ENCODE measurements at regions of chr9 and their contacts with region 1.

Region 1: DNA sequence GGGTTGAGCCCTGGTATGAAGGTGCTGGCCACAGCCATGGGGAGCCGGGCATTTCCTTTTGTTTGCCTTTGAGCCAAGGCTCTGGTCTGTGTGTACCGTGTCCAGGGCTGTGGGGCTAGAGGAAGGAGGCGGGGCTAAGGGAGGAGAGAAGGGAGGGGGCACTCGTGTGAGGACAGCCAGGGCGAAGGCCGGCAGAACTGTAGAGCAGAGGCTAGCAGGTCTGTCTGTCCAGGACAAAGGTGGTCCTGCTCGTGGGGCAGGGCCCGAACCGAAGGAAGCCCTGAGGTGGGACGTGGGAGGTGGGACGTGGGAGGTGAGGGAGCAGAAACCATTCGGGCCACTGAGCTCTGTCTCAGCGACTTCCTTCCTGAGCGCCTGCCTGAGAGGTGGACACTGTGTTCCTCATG is 41.3 kb upstream of the TESK1 start:
- DNase-seq: peak; percentile 83
- H3K4me3 ChIP-seq: peak overlapping the region in 3 of 4 donors; percentile 9 to 24 (median 14)
- H3K27ac ChIP-seq: peak overlapping the region; percentile 70 to 80 (median 76)
- H3K4me1 ChIP-seq: peaks cover 0 to 36% (median 26%) of the 10 kb centered on the region in 4 donors
- H3K27me3 ChIP-seq: no peaks in the 10 kb centered on the region
- CTCF ChIP-seq: no peak
- EP300 ChIP-seq: no peak
- POLR2A ChIP-seq: no peak

Region 2: DNA sequence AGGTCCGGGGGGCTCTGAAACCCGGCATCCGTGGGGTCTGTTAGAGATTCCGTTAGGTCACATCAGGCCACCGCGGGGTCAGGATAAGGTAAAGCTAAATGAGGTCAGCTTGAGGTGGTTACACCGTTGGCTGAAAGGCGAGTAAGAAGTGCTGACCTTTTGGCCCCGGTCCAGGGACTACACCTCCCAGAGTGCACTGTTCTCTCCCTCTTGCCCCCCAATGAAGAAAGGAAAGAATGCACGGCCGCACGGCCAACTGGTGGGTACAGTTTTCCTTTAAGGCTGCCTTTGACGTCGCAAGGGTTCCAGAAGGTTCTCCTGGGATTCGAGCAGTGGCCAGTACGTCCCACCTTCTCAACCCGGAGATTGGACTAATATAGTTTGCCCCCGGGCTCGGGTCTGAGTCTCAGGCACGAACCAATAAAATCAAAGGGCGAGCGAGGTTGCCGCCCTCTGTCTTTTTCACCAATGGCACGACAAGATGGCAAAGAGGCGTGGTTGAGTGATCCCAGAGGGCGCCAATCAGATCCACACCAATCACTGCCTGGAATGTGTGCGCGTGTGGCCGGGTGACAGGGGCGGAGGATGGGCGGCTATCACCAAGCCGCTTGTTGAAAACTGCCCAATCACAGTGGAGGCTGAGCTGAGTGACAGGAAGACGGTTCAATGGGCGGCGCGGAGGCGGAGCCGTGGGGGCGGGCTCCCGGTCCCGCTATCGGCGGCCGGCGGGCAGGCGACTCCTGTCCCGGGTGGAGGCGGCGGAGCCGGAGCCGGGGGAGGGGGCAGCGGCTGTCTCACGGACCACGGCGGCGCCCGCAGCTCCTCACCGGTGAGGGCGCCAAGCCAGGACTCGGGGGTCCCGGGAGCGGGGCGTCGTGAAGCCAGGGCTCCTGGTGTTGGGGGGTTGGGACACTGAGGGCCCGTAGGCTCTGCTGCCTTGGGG is 574.5 kb before region 1 on chr9 and contains the start of gene DNAJB5:
- intact Hi-C with region 1: no loop called
- DNase-seq: peak; percentile 100
- H3K4me3 ChIP-seq: peak within 1 kb of the TSS; percentile 67 to 97 (median 92)
- H3K27ac ChIP-seq: peak within 1 kb of the TSS in 3 of 4 donors; percentile 95 to 100 (median 98)
- H3K4me1 ChIP-seq: peaks cover 0 to 53% (median 48%) of the 10 kb centered on the region in 4 donors
- H3K27me3 ChIP-seq: no peaks in the 10 kb centered on the region
- CTCF ChIP-seq: no peak
- EP300 ChIP-seq: peak in 2 of 4 donors; percentile 58 to 66
- POLR2A ChIP-seq: peak; percentile 68 to 94
- total RNA-seq, gene DNAJB5: 27.8 to 58.7 (median 56.2) TPM

Region 3: GRCh38 chr9:35277628-35278359 is 286.0 kb before region 1 on chr9:
- intact Hi-C with region 1: loop called (anchors 10 kb)
- DNase-seq: no peak
- H3K4me3 ChIP-seq: no peak overlapping the region
- H3K27ac ChIP-seq: peak overlapping the region in 2 of 4 donors; percentile 5 to 58
- H3K4me1 ChIP-seq: peaks cover 0 to 12% (median 0%) of the 10 kb centered on the region in 4 donors
- H3K27me3 ChIP-seq: no peaks in the 10 kb centered on the region
- CTCF ChIP-seq: no peak
- EP300 ChIP-seq: no peak
- POLR2A ChIP-seq: no peak

Measured in sigmoid colon (tissue), 7 donors.